ENCODE measurements at regions of chr7 and their contacts with region 1.

Region 1: DNA sequence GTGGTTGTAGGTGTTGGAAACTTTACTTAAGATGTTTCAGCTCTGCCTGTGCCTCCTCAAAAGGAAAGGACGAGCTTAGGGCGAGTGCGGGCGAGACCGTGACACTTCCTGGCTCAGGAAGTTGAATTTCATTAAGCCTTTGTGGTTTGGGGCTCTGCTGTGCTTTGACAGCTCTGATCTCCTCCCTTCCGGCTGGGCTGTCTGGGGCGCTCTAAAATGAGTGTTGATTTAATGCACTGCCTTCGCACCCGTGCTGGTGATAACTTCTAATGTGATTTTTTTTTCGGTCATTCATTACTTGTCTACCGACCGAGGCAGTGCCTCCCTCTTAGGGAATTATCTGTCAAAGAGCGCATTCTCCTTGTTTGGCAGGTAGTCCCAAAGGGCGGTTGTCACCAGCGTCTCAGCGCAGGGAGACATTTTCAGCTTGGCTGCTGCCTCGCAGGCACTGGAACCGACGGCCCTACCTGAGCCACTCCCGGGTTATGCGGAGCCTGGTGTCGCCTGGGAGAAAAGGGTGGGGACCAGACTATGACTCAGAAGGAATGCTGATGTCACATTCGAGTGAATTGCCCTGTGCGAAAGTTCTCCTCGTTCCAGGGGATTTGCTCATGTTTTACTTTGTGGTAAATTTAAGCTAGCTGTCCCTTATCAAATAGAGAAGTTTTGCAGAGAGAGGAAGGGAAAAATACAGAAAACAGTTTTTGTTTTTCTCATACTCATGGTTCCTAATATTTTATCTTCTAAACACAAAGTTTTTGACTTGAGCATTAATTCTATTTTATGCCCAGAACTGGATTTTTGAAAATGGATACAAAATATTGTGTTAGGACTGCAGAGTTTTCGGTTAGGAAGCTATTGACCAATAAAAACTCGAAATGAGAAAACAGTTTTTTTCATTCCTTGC is 920 bp downstream of the TES start:
- DNase-seq: peak; percentile 92
- H3K4me3 Mint-ChIP-seq: peak overlapping the region; percentile 92
- H3K27ac Mint-ChIP-seq: peak overlapping the region; percentile 94
- H3K4me1 Mint-ChIP-seq: peaks cover 42% of the 10 kb centered on the region
- H3K27me3 Mint-ChIP-seq: no peaks in the 10 kb centered on the region

Region 2: DNA sequence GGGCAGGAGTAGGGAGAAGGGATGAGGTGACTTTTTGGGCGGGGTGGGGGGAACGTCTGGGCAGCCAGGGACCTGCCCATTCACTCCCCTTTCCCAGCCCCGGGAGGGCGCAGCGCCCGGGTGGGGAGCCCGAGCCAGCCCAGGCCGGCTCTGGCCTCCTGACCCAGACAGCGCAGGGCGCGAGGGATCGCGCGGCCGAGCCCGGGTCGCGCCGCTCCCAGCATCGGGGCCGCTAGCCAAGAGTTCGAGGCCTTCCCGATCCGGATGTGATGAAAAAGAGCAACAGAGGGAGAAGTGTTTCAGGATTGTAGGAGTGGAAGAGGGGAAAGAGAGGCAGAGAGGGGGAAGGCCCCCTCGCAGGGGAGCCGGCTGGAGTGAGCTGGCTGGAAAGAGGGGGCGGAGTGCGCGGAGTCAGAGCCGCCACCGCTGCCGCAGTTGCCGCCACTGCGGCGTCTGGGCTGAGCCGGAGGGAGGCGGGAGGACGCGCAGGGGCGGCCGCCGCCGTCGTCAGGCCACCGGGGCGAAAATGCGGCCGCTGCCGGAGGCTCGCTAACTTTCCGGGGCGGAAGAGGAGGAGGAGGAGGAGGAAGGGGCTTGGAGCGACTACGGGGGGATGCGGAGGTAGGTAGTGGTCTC is 1289.1 kb before region 1 on chr7 and contains the start of gene MDFIC:
- intact Hi-C with region 1: loop called (anchors 10 kb)
- DNase-seq: peak; percentile 89
- H3K4me3 Mint-ChIP-seq: peak within 1 kb of the TSS; percentile 96
- H3K27ac Mint-ChIP-seq: peak within 1 kb of the TSS; percentile 98
- H3K4me1 Mint-ChIP-seq: peaks cover 56% of the 10 kb centered on the region
- H3K27me3 Mint-ChIP-seq: no peaks in the 10 kb centered on the region
- total RNA-seq, gene MDFIC: 172 and 175 TPM in 2 replicates

Region 3: GRCh38 chr7:116145245-116145852 is 65.9 kb before region 1 on chr7:
- intact Hi-C with region 1: loop called (anchors 2 kb)
- DNase-seq: peak; percentile 76
- H3K4me3 Mint-ChIP-seq: peak overlapping the region; percentile 44
- H3K27ac Mint-ChIP-seq: peak overlapping the region; percentile 77
- H3K4me1 Mint-ChIP-seq: peaks cover 44% of the 10 kb centered on the region
- H3K27me3 Mint-ChIP-seq: peaks cover 7% of the 10 kb centered on the region

Region 4: GRCh38 chr7:116173051-116174028 is 37.9 kb before region 1 on chr7:
- intact Hi-C with region 1: no loop called
- DNase-seq: peak; percentile 78
- H3K4me3 Mint-ChIP-seq: no peak overlapping the region
- H3K27ac Mint-ChIP-seq: no peak overlapping the region
- H3K4me1 Mint-ChIP-seq: peaks cover 4% of the 10 kb centered on the region
- H3K27me3 Mint-ChIP-seq: peaks cover 28% of the 10 kb centered on the region

Region 5: DNA sequence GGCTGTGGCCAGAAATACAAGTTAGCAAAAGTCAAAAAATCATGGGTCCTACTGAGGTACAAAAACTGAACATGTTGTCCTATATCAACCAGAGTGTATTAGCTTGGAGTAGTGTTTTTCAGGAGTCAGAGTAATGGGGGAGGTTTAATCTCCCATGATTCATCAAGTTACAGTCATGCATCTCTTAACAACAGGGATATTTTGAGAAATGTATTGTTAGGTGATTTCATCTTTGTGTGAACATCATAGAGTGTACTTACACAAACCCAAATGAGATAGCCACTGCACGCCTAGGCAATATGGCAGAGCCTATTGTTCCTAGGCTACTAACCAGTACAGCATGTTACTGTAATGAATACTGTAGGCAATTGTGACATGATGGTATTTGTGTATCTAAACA is 15.8 kb before region 1 on chr7:
- intact Hi-C with region 1: no loop called
- DNase-seq: no peak
- H3K4me3 Mint-ChIP-seq: no peak overlapping the region
- H3K27ac Mint-ChIP-seq: no peak overlapping the region
- H3K4me1 Mint-ChIP-seq: no peaks in the 10 kb centered on the region
- H3K27me3 Mint-ChIP-seq: peaks cover 36% of the 10 kb centered on the region

Region 6: GRCh38 chr7:116224492-116225098 is 13.3 kb after region 1 on chr7:
- intact Hi-C with region 1: loop called (anchors 1 kb)
- DNase-seq: no peak
- H3K4me3 Mint-ChIP-seq: peak overlapping the region; percentile 65
- H3K27ac Mint-ChIP-seq: peak overlapping the region; percentile 51
- H3K4me1 Mint-ChIP-seq: peaks cover 41% of the 10 kb centered on the region
- H3K27me3 Mint-ChIP-seq: no peaks in the 10 kb centered on the region

Region 7: GRCh38 chr7:116236020-116236630 is 24.9 kb after region 1 on chr7:
- intact Hi-C with region 1: loop called (anchors 2 kb)
- DNase-seq: peak; percentile 84
- H3K4me3 Mint-ChIP-seq: no peak overlapping the region
- H3K27ac Mint-ChIP-seq: no peak overlapping the region
- H3K4me1 Mint-ChIP-seq: peaks cover 26% of the 10 kb centered on the region
- H3K27me3 Mint-ChIP-seq: no peaks in the 10 kb centered on the region

Region 8: GRCh38 chr7:116499168-116500077 is 288.2 kb after region 1 on chr7 and contains the start of gene CAV2:
- intact Hi-C with region 1: no loop called
- DNase-seq: no peak
- H3K4me3 Mint-ChIP-seq: peak within 1 kb of the TSS; percentile 45
- H3K27ac Mint-ChIP-seq: no peak within 1 kb of the TSS
- H3K4me1 Mint-ChIP-seq: peaks cover 9% of the 10 kb centered on the region
- H3K27me3 Mint-ChIP-seq: peaks cover 56% of the 10 kb centered on the region
- total RNA-seq, gene CAV2: not detected in 2 replicates

Region 9: DNA sequence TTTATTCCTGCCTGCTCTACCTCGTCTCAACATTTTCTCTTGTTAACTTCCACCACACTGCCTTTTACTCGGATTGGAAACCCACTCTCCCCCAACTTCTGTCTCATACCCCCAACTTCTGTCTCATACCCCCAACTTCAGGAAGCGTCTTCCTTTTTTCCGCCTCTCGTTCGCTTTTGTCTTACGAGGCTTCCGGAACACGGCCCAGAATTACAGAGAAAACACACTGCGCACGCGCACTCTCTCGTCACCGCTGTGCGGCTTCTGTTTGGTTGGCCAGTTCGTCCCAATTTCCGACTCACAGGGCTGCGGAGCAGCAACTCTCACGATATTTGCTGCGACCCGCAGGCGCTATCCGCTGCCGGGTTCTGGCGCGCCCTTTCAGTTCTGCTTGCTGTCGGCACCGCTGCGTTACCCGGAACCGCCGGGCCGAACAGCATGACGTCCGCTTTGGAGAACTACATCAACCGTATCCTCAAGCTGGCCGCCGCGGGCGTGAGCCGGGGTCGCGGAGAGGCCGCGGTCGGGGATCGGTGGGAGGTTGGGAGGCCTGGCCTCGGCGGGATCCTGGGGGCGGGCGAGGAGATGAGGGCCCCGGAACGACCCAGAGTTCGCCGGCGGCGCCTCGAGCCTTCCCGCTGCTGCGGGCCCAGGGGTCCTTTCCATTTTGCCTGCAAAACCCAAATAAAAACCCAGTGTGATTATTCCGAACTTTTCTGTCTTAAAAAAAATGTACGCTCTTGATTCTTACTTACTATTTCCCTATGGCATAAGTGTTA is 1972.7 kb after region 1 on chr7 and contains the start of gene LSM8:
- intact Hi-C with region 1: loop called (anchors 5 kb)
- DNase-seq: peak; percentile 99
- H3K4me3 Mint-ChIP-seq: peak within 1 kb of the TSS; percentile 99
- H3K27ac Mint-ChIP-seq: peak within 1 kb of the TSS; percentile 99
- H3K4me1 Mint-ChIP-seq: peaks cover 32% of the 10 kb centered on the region
- H3K27me3 Mint-ChIP-seq: no peaks in the 10 kb centered on the region
- total RNA-seq, gene LSM8: 49.4 and 59.9 TPM in 2 replicates

Measured in activated CD4-positive, alpha-beta T cell treated with anti-CD3 and anti-CD28 coated beads, Interleukin-2, amount 10 ng/mL, durations not matched to agents 24 days and 14 days (primary cell).